Calu3 (cell line): ENCODE measurements at regions of chr2 and their contacts with region 1.

Region 1: GRCh38 chr2:231227309-231228162 is 29.1 kb downstream of the ARMC9 start:
- DNase-seq: peak; percentile 72
- H3K4me3 Mint-ChIP-seq: no peak overlapping the region
- H3K27ac Mint-ChIP-seq: no peak overlapping the region
- H3K4me1 Mint-ChIP-seq: peaks cover 23% of the 10 kb centered on the region
- H3K27me3 Mint-ChIP-seq: no peaks in the 10 kb centered on the region
- CTCF ChIP-seq: peak; percentile 77

Region 2: DNA sequence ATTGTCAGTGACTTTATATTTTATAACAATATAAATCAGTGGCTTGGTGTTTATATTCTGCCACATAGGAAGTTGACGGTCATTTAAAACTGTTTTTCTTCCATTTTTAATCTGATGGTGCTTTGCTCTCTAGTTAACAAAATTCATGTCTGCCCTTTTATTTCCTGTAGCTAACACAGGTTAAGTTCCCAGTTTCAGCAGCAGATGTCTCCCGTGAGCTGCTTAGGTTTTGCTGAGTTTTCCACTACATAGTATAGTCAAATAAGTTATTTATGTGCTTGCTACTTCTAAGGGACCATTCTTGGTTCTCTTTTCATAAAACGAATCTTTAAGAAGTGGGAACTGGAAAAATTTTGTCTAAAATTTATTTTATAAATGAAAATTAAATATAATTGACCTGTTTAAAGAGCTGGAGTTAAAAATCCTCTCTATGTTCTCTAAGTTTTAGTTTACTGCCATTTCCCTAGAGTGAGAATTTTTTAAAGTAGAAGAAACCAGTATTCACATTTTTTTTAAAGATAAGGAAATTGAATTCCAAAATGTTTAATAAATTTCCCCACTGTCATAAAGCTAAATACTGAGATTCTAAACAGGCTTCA is 123.3 kb before region 1 on chr2:
- CTCF ChIA-PET with region 1: interaction called, 3 read pairs
- intact Hi-C with region 1: loop called (anchors 1 kb)
- DNase-seq: peak; percentile 61
- H3K4me3 Mint-ChIP-seq: no peak overlapping the region
- H3K27ac Mint-ChIP-seq: no peak overlapping the region
- H3K4me1 Mint-ChIP-seq: peaks cover 10% of the 10 kb centered on the region
- H3K27me3 Mint-ChIP-seq: no peaks in the 10 kb centered on the region
- CTCF ChIP-seq: peak; percentile 67